ENCODE measurements at regions of chr2 and their contacts with region 1.

Region 1: DNA sequence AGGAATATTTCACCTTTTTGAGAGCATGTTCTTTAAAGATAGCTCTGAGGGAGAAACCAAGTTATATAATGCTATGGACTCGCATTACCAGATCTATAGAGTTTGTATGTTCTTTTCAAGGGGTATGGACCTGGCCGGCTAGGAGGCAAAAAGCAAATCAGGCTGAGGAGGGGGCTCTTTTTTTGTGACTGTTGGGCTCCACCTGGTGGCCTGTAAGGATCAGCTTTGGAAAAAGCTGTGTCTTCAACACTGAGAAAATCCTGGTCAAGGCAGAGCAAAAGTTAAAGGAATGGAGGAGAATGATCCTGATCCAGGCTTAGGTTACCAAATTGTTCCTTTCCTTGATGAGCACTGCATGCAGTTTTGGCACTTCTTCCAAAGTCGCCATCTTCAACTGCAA is 180.5 kb downstream of the DIS3L2 start:
- DNase-seq: peak in 1 of 2 donors; percentile 32
- ATAC-seq: peak in 6 of 8 donors; percentile 35 to 76 (median 58)
- H3K4me3 ChIP-seq: no peak overlapping the region
- H3K27ac ChIP-seq: no peak overlapping the region
- H3K4me1 ChIP-seq: peaks cover 0 to 18% (median 4%) of the 10 kb centered on the region in 9 donors
- H3K27me3 ChIP-seq: no peaks in the 10 kb centered on the region
- CTCF ChIP-seq: peak in 8 of 9 donors; percentile 50 to 79 (median 70)

Region 2: DNA sequence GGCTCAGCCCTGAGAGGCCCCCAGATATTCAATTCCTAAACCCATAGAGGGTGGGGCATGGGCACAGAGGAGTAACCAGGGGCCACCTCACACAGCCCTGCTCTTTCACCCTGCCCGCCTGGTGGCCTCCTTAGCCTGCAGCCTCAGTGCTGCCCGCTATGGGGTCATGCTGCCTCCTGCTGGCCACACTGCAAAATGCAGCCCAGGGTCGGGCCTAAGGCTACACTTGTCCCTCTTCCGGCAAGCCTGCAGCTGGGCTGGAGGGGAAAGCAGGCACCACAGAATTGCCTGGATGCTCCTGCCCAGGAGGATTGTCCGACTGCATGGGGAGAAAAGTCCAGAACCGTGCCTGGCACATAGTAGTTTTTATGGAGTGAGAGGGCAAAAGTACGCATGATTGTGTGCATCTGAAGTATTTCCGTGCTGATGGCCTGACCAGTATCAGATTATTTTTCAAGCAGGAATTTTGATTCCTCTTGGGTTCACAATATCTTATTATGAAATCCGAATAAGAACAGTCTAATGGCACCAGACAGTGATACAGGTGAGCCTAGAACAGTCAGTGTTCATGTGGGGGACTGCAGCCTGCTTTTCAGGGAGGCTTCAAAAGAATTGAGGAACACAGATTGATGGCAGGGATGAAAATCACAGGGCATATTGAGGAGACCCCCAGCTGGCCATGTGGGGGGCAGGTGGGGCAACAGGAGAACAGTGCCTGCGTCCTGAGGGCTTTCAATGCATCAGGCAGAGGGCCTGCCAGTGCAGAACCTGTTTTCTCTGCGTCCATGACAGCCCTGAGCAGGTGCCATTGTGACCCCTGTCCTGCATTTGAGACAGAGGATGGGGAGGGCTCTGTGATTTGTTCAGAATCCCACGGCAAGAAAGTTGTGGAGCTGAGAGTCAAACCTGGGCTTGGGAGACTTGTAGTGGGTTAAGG is 185.3 kb after region 1 on chr2:
- intact Hi-C with region 1: loop called in 2 of 10 experiments (anchors 10 kb)
- DNase-seq: peak; percentile 58 to 71
- ATAC-seq: peak in 7 of 8 donors; percentile 35 to 73 (median 66)
- H3K4me3 ChIP-seq: no peak overlapping the region
- H3K27ac ChIP-seq: no peak overlapping the region
- H3K4me1 ChIP-seq: peaks cover 0 to 11% (median 3%) of the 10 kb centered on the region in 9 donors
- H3K27me3 ChIP-seq: no peaks in the 10 kb centered on the region
- CTCF ChIP-seq: peak; percentile 56 to 84 (median 78)